ENCODE measurements at regions of chr15 and their contacts with region 1.

Region 1: DNA sequence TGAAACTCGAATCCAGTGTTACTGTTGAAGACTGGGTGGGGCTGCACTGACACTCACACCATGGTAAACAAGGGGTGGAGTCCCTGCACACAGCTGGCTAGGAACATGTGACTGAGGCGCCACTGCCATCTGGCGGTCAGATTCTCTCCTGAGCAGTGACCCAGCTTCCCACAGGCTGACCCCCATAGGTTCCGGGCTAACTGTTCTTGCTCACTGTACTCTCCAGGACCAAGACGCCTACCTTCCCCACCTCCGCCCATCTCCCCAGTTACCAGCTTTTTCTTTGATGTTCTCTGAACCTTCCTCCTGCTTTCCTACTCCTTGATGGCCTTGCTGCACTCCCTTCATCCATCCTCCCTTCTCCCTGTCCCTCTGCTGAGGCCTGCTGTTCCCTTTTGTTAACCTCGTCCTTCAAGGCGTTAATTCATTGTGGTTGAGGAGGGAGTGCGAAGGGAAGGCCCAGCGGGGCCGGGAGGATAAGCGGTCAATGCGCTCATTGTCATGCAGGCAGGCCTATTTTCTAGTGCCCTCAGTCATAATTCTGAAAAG is 115.2 kb downstream of the ATP8B4 start:
- DNase-seq: peak; percentile 84
- ATAC-seq: peak; percentile 98 to 100

Region 2: GRCh38 chr15:49215768-49216739 is 787.8 kb before region 1 on chr15:
- intact Hi-C with region 1: no loop called
- DNase-seq: peak; percentile 37
- ATAC-seq: peak; percentile 92 to 95

Region 3: GRCh38 chr15:49235446-49236124 is 768.3 kb before region 1 on chr15:
- intact Hi-C with region 1: loop called in 1 of 2 experiments (anchors 5 kb)
- DNase-seq: peak; percentile 33
- ATAC-seq: peak; percentile 86 to 92

Region 4: GRCh38 chr15:49620658-49621368 is 383.0 kb before region 1 on chr15 and contains the starts of genes DTWD1 and FAM227B:
- intact Hi-C with region 1: loop called in 1 of 2 experiments (anchors 10 kb)
- DNase-seq: peak; percentile 98
- ATAC-seq: peak; percentile 99 to 100
- total RNA-seq, gene DTWD1: 25.2 to 25.7 TPM
- total RNA-seq, gene FAM227B: 8.2 to 9.8 TPM

Region 5: DNA sequence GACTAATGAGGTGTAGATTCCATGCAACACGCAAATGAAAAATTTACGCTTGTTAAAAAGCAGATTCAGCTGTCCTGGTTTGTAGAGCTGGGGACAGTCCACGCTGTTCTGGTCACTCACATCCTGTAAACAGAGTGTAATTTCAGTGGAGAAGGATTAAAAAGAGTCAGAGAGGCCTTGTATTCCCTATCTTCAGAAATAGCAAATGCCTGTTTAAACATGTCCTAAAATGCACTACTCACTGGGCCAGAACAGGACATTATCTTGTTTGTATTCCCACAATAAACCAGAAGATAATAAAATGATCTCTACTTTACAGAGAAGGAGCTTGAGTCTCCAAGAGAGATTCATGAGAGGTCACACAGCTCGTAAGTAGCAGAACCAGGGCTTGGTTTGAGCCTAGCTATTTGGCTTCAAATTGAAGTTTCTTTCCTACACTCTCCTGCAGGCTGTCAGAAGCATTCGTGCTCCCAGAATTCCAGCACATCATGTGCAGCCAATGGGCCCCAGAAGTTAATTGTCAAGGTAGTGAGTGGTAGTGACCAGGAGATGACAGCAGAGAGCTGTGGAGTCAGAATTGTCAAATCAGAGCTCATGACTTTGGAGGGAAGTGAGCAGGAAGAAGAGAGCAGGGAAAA is 127.3 kb before region 1 on chr15:
- intact Hi-C with region 1: loop called (anchors 5 to 10 kb)
- DNase-seq: no peak
- ATAC-seq: peak; percentile 31 to 77

Region 6: GRCh38 chr15:49887659-49888322 is 116.1 kb before region 1 on chr15:
- intact Hi-C with region 1: loop called in 1 of 2 experiments (anchors 10 kb)
- DNase-seq: no peak
- ATAC-seq: no peak